A673 (cell line): ENCODE measurements at regions of chr4 and their contacts with region 1.

Region 1: GRCh38 chr4:186688150-186688943 is 35.3 kb downstream of the FAT1 start:
- DNase-seq: peak; percentile 90
- H3K4me3 ChIP-seq: peak overlapping the region; percentile 5
- H3K27ac ChIP-seq: peak overlapping the region; percentile 70
- H3K4me1 ChIP-seq: peaks cover 75% of the 10 kb centered on the region
- H3K27me3 ChIP-seq: no peaks in the 10 kb centered on the region
- CTCF ChIP-seq: no peak

Region 2: GRCh38 chr4:186326391-186326790 is 362.0 kb before region 1 on chr4:
- CTCF ChIA-PET with region 1: no interaction called
- POLR2A ChIA-PET with region 1: no interaction called
- intact Hi-C with region 1: no loop called
- DNase-seq: peak; percentile 8
- H3K4me3 ChIP-seq: no peak overlapping the region
- H3K27ac ChIP-seq: no peak overlapping the region
- H3K4me1 ChIP-seq: no peaks in the 10 kb centered on the region
- H3K27me3 ChIP-seq: no peaks in the 10 kb centered on the region
- CTCF ChIP-seq: no peak

Region 3: DNA sequence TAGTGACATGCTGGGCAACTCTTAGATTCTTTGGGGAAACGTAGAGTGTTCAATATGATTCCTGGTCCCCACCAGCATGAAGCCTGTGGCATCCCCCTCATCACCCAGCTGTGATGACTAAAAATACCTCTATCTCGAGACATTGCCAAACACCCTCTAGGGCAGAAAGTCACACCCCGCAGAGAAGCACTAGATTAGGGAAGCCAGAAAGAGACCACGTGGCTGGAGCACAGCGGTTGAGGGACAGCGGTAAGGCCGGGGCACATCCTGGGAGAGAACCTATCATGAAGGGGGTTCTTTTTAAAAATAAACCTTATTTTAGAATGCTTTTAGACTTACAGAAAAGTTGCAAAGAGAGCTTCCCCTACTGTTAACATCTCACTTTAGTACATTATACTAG is 24.3 kb after region 1 on chr4:
- CTCF ChIA-PET with region 1: no interaction called
- POLR2A ChIA-PET with region 1: interaction called, 15 read pairs
- intact Hi-C with region 1: no loop called
- DNase-seq: no peak
- H3K4me3 ChIP-seq: no peak overlapping the region
- H3K27ac ChIP-seq: no peak overlapping the region
- H3K4me1 ChIP-seq: peaks cover 9% of the 10 kb centered on the region
- H3K27me3 ChIP-seq: no peaks in the 10 kb centered on the region
- CTCF ChIP-seq: no peak